ENCODE measurements at regions of chrX and their contacts with region 1.

Region 1: GRCh38 chrX:139204898-139205667 is 325.5 kb upstream of the F9 start:
- DNase-seq: peak; percentile 58
- ATAC-seq: peak; percentile 43
- H3K4me3 ChIP-seq: peak overlapping the region; percentile 75
- H3K27ac ChIP-seq: no peak overlapping the region
- H3K4me1 ChIP-seq: peaks cover 28% of the 10 kb centered on the region
- H3K27me3 ChIP-seq: no peaks in the 10 kb centered on the region
- CTCF ChIP-seq: 0 out of 2 replicates have a peak, but pooled peaks have one; percentile 20

Region 2: DNA sequence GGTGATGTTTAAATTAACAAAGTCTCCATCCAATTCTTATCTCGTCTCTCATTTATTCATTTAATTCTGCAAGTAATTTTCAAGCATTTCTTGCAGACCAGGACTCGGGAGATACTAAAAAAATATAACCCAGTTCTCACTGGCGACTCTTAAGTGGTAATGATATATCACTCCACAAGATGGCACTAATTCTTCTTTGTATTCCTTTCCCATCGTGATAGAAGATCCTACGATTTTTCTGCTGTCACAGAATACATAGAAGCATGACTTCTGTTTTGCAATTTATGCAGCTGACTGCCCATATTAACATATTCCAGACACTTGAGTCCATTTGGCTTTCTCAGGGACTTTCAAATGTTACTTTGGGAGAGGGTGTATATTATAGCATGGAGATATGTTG is 429.6 kb before region 1 on chrX:
- CTCF ChIA-PET with region 1: no interaction called
- POLR2A ChIA-PET with region 1: no interaction called
- intact Hi-C with region 1: loop called (anchors 10 kb)
- DNase-seq: peak; percentile 74
- ATAC-seq: peak; percentile 76
- H3K4me3 ChIP-seq: no peak overlapping the region
- H3K27ac ChIP-seq: no peak overlapping the region
- H3K4me1 ChIP-seq: peaks cover 17% of the 10 kb centered on the region
- H3K27me3 ChIP-seq: no peaks in the 10 kb centered on the region
- CTCF ChIP-seq: peak; percentile 67

Region 3: DNA sequence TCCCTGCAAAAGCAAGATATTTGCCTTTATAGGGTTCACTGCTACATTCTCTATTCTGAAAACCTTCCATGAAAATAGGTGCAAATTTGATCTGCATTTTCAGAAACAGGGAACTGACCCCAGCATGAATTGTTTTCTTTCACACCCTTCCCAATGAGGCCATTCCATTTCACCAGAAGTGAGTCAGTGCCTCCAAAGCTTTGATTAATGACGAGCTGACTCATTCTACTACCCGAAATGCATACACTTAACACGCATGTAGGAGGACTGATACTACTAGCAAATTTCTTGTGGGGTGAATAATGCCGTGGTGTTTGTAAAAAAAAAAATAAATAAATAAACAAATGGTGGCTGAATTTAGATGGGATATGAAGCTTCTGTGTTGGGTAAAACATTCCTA is 346.6 kb before region 1 on chrX:
- CTCF ChIA-PET with region 1: no interaction called
- POLR2A ChIA-PET with region 1: interaction called, 4 read pairs
- intact Hi-C with region 1: loop called (anchors 5 kb)
- DNase-seq: peak; percentile 76
- ATAC-seq: peak; percentile 79
- H3K4me3 ChIP-seq: no peak overlapping the region
- H3K27ac ChIP-seq: peak overlapping the region; percentile 61
- H3K4me1 ChIP-seq: peaks cover 31% of the 10 kb centered on the region
- H3K27me3 ChIP-seq: no peaks in the 10 kb centered on the region
- CTCF ChIP-seq: no peak

Region 4: GRCh38 chrX:139058831-139059495 is 146.1 kb before region 1 on chrX:
- CTCF ChIA-PET with region 1: no interaction called
- POLR2A ChIA-PET with region 1: no interaction called
- intact Hi-C with region 1: loop called (anchors 2 kb)
- DNase-seq: peak; percentile 93
- ATAC-seq: peak; percentile 68
- H3K4me3 ChIP-seq: peak overlapping the region; percentile 57
- H3K27ac ChIP-seq: peak overlapping the region; percentile 67
- H3K4me1 ChIP-seq: peaks cover 24% of the 10 kb centered on the region
- H3K27me3 ChIP-seq: no peaks in the 10 kb centered on the region
- CTCF ChIP-seq: no peak

Region 5: GRCh38 chrX:139126493-139126892 is 78.6 kb before region 1 on chrX:
- CTCF ChIA-PET with region 1: no interaction called
- POLR2A ChIA-PET with region 1: no interaction called
- intact Hi-C with region 1: loop called (anchors 1 kb)
- DNase-seq: peak; percentile 80
- ATAC-seq: peak; percentile 64; the same call in 1 of the 2 replicates
- H3K4me3 ChIP-seq: no peak overlapping the region
- H3K27ac ChIP-seq: no peak overlapping the region
- H3K4me1 ChIP-seq: peaks cover 15% of the 10 kb centered on the region
- H3K27me3 ChIP-seq: no peaks in the 10 kb centered on the region
- CTCF ChIP-seq: peak; percentile 77

Region 6: DNA sequence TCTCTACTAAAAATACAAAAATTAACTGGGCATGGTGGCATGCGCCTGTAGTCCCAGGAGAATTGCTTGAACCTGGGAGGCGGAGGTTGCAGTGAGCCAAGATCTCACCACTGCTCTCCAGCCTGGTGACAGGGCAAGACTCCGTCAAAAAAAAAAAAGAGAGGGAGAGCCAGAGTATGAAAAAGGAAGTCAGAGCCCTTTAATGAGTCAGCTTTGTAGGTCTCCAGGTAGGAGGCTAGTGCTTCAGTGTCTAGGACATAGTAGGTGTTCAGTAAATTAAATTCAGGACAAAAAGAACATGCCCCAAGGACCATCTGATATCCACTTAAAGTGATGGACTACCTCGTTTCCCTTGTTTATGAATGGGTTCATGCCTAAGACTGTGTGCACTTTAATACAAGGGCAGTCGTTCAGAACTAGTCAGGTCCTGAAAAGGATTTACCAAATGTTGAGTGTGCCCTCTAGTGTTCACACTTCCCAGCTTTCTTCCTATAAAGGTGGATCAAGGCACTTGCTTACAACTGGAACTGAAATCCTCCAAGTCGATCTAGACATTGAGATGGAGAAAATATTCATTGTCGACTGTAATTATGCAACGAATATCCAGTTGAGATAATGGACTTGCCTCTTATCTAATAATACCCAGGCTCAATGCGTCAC is 354.4 kb after region 1 on chrX:
- CTCF ChIA-PET with region 1: no interaction called
- POLR2A ChIA-PET with region 1: no interaction called
- intact Hi-C with region 1: loop called (anchors 10 kb)
- DNase-seq: peak; percentile 78
- ATAC-seq: peak; percentile 81
- H3K4me3 ChIP-seq: no peak overlapping the region
- H3K27ac ChIP-seq: no peak overlapping the region
- H3K4me1 ChIP-seq: no peaks in the 10 kb centered on the region
- H3K27me3 ChIP-seq: peaks cover 10% of the 10 kb centered on the region
- CTCF ChIP-seq: peak; percentile 74

Region 7: DNA sequence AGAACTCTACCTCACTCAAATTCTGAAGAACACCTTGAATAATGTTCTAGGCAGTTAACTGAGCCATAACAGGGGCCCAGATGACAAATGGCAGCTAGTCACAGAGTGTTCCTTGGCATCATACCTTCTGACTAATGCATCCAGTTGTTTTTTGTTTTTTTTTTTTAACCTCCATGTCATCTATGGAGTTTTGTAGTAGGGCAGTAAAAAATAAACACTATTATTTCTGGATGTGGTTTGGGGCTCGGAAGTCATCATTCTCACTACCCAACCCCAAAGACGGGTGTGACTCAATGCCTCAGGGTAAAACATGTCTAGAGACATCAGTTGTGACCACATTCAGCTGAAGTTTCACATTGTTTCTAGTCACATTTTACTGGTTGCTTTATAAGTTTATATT is 534.1 kb after region 1 on chrX:
- CTCF ChIA-PET with region 1: no interaction called
- POLR2A ChIA-PET with region 1: no interaction called
- intact Hi-C with region 1: loop called (anchors 5 kb)
- DNase-seq: peak; percentile 83
- ATAC-seq: peak; percentile 87
- H3K4me3 ChIP-seq: no peak overlapping the region
- H3K27ac ChIP-seq: peak overlapping the region; percentile 86
- H3K4me1 ChIP-seq: peaks cover 24% of the 10 kb centered on the region
- H3K27me3 ChIP-seq: no peaks in the 10 kb centered on the region
- CTCF ChIP-seq: no peak